ENCODE measurements at regions of chr2 and their contacts with region 1.

Region 1: GRCh38 chr2:31079665-31080064 is 58.6 kb downstream of the GALNT14 start:
- DNase-seq: peak in 1 of 2 experiments; percentile 74
- H3K4me3 ChIP-seq: no peak overlapping the region
- H3K27ac ChIP-seq: no peak overlapping the region
- H3K4me1 ChIP-seq: peaks cover 0 to 8% (median 3%) of the 10 kb centered on the region in 4 experiments; a peak in 3 of 7 replicates
- H3K27me3 ChIP-seq: no peaks in the 10 kb centered on the region
- CTCF ChIP-seq: peak; percentile 75 to 82 (median 81)
- EP300 ChIP-seq: no peak
- POLR2A ChIP-seq: no peak
- RAD21 ChIP-seq: peak; percentile 51 to 71

Region 2: DNA sequence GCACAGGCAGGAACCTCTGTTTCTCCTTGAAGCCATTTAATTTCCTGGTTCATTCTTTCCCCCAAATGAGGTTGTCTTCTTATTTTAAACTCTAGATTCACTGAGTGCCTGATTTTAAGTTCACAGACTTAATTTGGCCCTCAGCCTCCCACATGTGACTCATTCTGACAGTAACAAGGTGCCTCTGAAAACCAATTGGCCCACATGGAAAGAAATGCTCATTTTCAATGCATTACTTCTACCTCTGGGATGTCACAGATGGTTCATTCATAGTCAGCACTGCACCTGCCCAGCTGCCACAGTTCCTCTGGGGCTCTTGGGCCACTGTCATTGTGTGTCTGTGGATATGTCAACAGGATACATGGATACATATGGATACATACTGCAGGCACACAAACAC is 132.0 kb before region 1 on chr2:
- CTCF ChIA-PET with region 1: no interaction called
- POLR2A ChIA-PET with region 1: no interaction called
- DNase-seq: no peak
- H3K4me3 ChIP-seq: no peak overlapping the region
- H3K27ac ChIP-seq: no peak overlapping the region
- H3K4me1 ChIP-seq: peaks cover 0 to 4% (median 0%) of the 10 kb centered on the region in 4 experiments; a peak in 1 of 7 replicates
- H3K27me3 ChIP-seq: no peaks in the 10 kb centered on the region
- CTCF ChIP-seq: no peak
- EP300 ChIP-seq: no peak
- POLR2A ChIP-seq: no peak
- RAD21 ChIP-seq: no peak

Region 3: DNA sequence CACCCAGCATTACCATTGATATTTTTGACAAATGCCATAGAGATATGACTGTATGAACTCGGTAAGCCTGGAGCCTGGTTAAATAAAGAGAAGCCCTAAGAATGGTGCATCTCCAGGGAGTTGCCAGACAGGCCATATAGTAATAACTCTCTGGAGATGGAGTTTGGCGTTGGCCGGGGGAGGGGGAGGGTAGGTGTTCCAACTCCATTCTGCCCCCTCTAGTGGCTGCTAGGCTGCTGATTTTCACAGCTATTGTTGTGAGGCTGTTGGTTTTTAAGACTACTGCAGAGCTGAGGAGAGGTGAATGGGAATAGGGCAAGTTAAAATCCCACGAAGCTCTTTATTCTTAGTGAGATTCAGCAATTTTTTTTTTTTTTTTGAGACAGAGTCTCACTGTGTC is 41.3 kb before region 1 on chr2:
- CTCF ChIA-PET with region 1: interaction called, 11 read pairs
- POLR2A ChIA-PET with region 1: no interaction called
- DNase-seq: peak; percentile 9 to 62
- H3K4me3 ChIP-seq: no peak overlapping the region
- H3K27ac ChIP-seq: no peak overlapping the region
- H3K4me1 ChIP-seq: no peaks in the 10 kb centered on the region; a peak in 1 of 7 replicates
- H3K27me3 ChIP-seq: no peaks in the 10 kb centered on the region
- CTCF ChIP-seq: peak; percentile 61 to 74 (median 62)
- EP300 ChIP-seq: no peak
- POLR2A ChIP-seq: no peak
- RAD21 ChIP-seq: peak; percentile 40 to 55

Region 4: GRCh38 chr2:31049916-31050588 is 29.6 kb before region 1 on chr2:
- CTCF ChIA-PET with region 1: interaction called, 10 read pairs
- POLR2A ChIA-PET with region 1: no interaction called
- DNase-seq: no peak
- H3K4me3 ChIP-seq: no peak overlapping the region
- H3K27ac ChIP-seq: no peak overlapping the region
- H3K4me1 ChIP-seq: no peaks in the 10 kb centered on the region
- H3K27me3 ChIP-seq: no peaks in the 10 kb centered on the region
- CTCF ChIP-seq: no peak
- EP300 ChIP-seq: no peak
- POLR2A ChIP-seq: no peak
- RAD21 ChIP-seq: no peak

Region 5: DNA sequence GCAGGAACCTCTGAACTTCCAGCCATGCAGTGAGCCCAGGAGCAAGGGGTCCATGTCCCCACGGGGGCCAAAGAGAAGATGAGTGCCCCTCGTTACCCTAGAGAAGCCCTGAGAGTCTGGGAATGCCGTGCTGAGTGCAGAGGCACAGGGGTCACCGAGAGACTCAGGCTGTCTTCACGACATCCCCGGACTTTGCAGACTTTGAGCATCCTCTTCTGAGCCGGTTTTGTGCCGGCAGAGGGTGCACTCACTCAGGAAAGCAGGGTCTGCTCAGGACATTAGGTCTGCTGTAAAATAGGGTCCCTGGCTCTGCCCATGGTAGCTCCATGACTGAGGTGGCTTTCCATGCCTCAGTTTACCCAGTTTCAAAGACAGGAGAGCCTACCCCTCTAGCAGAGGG is 12.4 kb before region 1 on chr2:
- CTCF ChIA-PET with region 1: interaction called, 21 read pairs
- POLR2A ChIA-PET with region 1: no interaction called
- DNase-seq: no peak
- H3K4me3 ChIP-seq: no peak overlapping the region
- H3K27ac ChIP-seq: no peak overlapping the region; the same call in 1 of the 2 replicates
- H3K4me1 ChIP-seq: no peaks in the 10 kb centered on the region; a peak in 1 of 7 replicates
- H3K27me3 ChIP-seq: 0 out of 7 replicates have a peak, but pooled peaks cover 0 to 2% (median 0%) of the 10 kb centered on the region in 4 experiments
- CTCF ChIP-seq: peak in 1 of 3 experiments; percentile 12; a peak in 1 of 4 replicates
- EP300 ChIP-seq: no peak
- POLR2A ChIP-seq: no peak
- RAD21 ChIP-seq: peak in 1 of 2 experiments; percentile 24; a peak in 1 of 4 replicates